ENCODE measurements at regions of chr22 and their contacts with region 1.

Region 1: GRCh38 chr22:22710719-22711531 is 66.5 kb downstream of the GGTLC2 start:
- DNase-seq: peak in 9 of 10 donors; percentile 29 to 89 (median 61)

Region 2: GRCh38 chr22:22750335-22751042 is 39.6 kb after region 1 on chr22:
- intact Hi-C with region 1: loop called (anchors 2 kb)
- DNase-seq: no peak